Tibial artery (tissue), 4 donors: ENCODE measurements at regions of chr17 and their contacts with region 1.

Region 1: DNA sequence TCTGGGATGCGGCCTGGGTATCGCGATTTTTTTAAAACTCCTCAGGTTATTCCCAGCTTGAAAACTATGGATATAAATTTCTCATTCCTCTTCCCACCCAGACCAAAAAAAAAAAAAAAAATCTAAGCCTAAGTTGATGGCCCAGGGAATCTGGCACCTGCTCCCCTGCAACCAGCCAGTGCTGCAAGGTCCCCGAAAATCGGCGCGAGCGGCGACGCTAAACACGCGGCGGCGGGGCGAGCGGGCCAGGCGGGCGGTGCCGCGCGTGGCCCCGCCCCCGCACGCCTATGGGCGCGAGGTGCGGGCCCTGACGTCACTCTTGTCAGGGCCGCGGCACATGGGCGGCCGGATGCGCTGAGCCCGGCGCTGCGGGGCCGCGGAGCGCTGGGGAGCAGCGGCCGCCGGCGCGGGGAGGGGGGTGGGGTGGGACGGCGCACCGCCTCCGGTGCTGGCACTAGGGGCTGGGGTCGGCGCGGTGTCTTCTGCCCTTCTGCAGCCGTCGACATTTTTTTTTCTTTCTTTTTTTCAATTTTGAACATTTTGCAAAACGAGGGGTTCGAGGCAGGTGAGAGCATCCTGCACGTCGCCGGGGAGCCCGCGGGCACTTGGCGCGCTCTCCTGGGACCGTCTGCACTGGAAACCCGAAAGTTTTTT is at the start of gene HLF:
- DNase-seq: peak; percentile 75 to 91
- H3K4me3 ChIP-seq: peak within 1 kb of the TSS; percentile 62 to 84
- H3K27ac ChIP-seq: peak within 1 kb of the TSS; percentile 90 to 91
- H3K4me1 ChIP-seq: peaks cover 0 to 55% (median 24%) of the 10 kb centered on the region in 4 donors
- H3K27me3 ChIP-seq: no peaks in the 10 kb centered on the region
- CTCF ChIP-seq: no peak

Region 2: DNA sequence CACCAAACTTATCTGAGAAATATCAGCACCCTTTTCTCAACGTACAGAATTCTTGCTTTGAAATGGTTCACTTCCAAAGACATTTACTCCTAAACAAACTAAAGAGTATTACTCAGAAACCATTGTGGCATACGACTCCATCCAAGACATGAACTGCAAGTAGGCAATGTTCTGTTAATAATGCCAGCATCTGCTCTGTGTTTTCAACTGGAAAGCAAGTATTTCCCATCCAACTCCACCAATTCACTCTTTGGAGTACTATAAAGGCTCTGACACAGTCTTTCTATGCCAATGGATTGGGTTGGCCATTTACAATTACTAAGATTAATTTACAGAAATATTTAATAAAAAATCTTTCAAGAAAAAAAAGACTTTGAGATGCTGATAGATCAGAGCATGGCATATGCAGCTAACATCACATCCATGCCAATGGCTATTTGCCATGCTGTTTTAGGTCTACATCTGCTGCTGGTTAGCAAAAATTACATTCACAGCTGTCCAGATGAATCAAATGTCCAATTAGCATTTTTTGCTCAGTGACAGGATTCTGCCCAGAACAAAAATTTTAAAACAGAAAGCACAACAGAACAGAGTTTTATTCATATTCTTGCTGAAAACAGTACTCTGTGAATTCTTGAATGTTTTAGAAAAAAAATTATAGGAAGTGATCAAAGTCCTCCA is 65.9 kb before region 1 on chr17:
- intact Hi-C with region 1: no loop called
- DNase-seq: no peak
- H3K4me3 ChIP-seq: no peak overlapping the region
- H3K27ac ChIP-seq: no peak overlapping the region
- H3K4me1 ChIP-seq: no peaks in the 10 kb centered on the region
- H3K27me3 ChIP-seq: no peaks in the 10 kb centered on the region
- CTCF ChIP-seq: no peak

Region 3: GRCh38 chr17:55238179-55238930 is 26.4 kb before region 1 on chr17:
- intact Hi-C with region 1: loop called (anchors 2 kb)
- DNase-seq: peak; percentile 91 to 96
- H3K4me3 ChIP-seq: peak overlapping the region; percentile 57 to 65
- H3K27ac ChIP-seq: peak overlapping the region; percentile 73 to 76
- H3K4me1 ChIP-seq: peaks cover 0 to 21% (median 13%) of the 10 kb centered on the region in 4 donors
- H3K27me3 ChIP-seq: peaks cover 0 to under 1% of the 10 kb centered on the region in 2 donors
- CTCF ChIP-seq: no peak

Region 4: DNA sequence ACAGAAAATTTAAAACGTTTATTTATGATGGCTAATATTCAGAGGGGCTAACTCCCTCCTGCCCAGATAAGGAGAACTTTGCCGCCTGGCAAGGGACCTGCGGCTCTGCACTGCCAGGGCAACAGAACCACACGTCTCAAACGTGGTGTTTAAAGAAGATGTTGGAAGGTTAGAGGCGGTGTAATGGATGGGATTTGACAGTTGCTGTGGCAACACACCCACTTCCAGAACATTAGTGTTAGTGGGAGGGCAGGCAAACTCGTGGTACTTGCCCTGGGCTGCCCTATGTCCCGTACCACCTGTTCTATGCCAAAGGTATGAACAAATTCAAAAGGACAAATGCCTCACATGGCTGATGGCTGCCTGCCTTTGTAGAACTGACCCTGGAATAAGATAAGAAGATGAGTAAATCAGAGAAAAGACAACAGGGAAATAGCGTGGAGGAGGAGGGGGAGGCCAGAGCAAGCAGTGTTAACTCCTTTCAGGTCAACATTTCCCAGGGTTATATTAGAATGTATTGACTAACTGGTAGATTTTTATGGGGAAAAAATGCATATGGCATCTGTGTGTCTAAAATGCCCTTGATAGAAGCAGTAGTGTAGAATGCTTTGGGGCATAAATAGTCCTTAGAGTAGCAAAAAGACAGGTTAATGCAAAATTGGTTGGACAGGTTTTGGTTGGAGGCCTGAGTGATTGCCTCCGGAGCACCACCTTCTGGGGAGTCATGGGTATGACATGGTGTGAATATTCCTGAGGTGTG is 30.8 kb after region 1 on chr17:
- intact Hi-C with region 1: loop called (anchors 5 kb)
- DNase-seq: peak in 1 of 2 donors; percentile 58
- H3K4me3 ChIP-seq: no peak overlapping the region
- H3K27ac ChIP-seq: peak overlapping the region; percentile 43 to 53
- H3K4me1 ChIP-seq: peaks cover 0 to 17% (median 7%) of the 10 kb centered on the region in 4 donors
- H3K27me3 ChIP-seq: no peaks in the 10 kb centered on the region
- CTCF ChIP-seq: peak; percentile 89